Heart left ventricle (tissue), 16 donors: ENCODE measurements at regions of chr17 and their contacts with region 1.

Region 1: DNA sequence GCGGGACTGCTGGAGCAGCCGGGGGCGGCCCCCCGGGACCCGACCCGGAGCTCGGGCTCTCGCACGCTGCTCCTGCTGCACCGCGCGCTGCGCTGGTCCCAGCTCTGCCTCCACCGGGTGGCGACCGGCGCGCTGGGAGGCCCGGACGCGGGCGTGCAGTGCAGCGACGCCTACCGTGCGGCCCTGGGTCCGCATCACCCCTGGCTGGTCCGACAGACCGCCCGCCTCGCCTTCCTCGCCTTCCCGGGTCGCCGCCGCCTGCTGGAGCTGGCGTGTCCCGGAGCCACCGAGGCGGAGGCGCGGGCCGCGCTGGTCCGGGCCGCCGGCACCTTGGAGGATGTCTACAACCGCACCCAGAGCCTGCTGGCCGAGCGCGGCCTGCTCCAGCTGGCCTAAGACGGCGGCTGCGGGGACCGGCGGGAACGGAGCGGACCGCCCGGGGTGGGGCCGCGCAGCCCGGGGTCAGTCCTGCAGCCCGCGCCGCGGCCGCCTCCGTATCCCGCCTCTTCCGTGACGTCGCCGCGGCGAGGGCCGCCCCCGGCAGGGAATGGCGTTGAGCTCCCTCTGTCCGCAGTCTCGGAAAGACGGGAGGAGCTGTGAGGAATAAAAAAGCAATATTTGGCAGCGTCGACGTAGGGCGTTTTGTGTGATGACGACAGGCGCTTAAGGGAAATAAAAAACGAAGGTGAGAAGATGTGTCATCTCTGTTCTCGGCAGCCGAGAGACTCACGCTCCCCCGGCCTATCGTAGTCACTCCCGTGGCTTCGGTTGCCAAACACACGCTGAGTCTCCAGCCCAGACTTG is 1.3 kb downstream of the GLTPD2 start:
- DNase-seq: peak; percentile 87 to 94 (median 91)
- ATAC-seq: peak; percentile 87 to 96 (median 94)
- H3K4me3 ChIP-seq: peak overlapping the region; percentile 49 to 95 (median 72)
- H3K27ac ChIP-seq: peak overlapping the region; percentile 90 to 99 (median 96)
- H3K4me1 ChIP-seq: peaks cover 0 to 50% (median 36%) of the 10 kb centered on the region in 12 donors
- H3K27me3 ChIP-seq: peaks cover 0 to 15% (median 7%) of the 10 kb centered on the region in 9 donors
- CTCF ChIP-seq: peak; percentile 58 to 88 (median 76)
- POLR2A ChIP-seq: peak in 1 of 2 donors; percentile 89

Region 2: GRCh38 chr17:4709794-4710692 is 80.1 kb before region 1 on chr17 and contains the start of gene ARRB2:
- intact Hi-C with region 1: loop called in 3 of 10 experiments (anchors 2 to 5 kb)
- DNase-seq: peak; percentile 97 to 100 (median 98)
- ATAC-seq: peak; percentile 95
- H3K4me3 ChIP-seq: peak within 1 kb of the TSS; percentile 47 to 93 (median 72)
- H3K27ac ChIP-seq: peak within 1 kb of the TSS; percentile 33 to 94 (median 77)
- H3K4me1 ChIP-seq: peaks cover 0 to 42% (median 11%) of the 10 kb centered on the region in 12 donors
- H3K27me3 ChIP-seq: no peaks in the 10 kb centered on the region
- CTCF ChIP-seq: peak; percentile 37 to 80 (median 61)
- POLR2A ChIP-seq: peak in 1 of 2 donors; percentile 65
- total RNA-seq, gene ARRB2: 10.9 to 87.6 (median 23.0) TPM

Region 3: GRCh38 chr17:4733073-4733531 is 57.0 kb before region 1 on chr17:
- intact Hi-C with region 1: loop called in 8 of 10 experiments (anchors 2 to 10 kb)
- DNase-seq: peak in 2 of 5 donors; percentile 48 to 55
- ATAC-seq: no peak
- H3K4me3 ChIP-seq: no peak overlapping the region
- H3K27ac ChIP-seq: peak overlapping the region in 3 of 12 donors; percentile 24 to 91 (median 62)
- H3K4me1 ChIP-seq: peaks cover 0 to 55% (median 11%) of the 10 kb centered on the region in 12 donors
- H3K27me3 ChIP-seq: peaks cover 0 to 4% (median 0%) of the 10 kb centered on the region in 9 donors
- CTCF ChIP-seq: peak in 2 of 12 donors; percentile 8 to 10
- POLR2A ChIP-seq: no peak

Region 4: DNA sequence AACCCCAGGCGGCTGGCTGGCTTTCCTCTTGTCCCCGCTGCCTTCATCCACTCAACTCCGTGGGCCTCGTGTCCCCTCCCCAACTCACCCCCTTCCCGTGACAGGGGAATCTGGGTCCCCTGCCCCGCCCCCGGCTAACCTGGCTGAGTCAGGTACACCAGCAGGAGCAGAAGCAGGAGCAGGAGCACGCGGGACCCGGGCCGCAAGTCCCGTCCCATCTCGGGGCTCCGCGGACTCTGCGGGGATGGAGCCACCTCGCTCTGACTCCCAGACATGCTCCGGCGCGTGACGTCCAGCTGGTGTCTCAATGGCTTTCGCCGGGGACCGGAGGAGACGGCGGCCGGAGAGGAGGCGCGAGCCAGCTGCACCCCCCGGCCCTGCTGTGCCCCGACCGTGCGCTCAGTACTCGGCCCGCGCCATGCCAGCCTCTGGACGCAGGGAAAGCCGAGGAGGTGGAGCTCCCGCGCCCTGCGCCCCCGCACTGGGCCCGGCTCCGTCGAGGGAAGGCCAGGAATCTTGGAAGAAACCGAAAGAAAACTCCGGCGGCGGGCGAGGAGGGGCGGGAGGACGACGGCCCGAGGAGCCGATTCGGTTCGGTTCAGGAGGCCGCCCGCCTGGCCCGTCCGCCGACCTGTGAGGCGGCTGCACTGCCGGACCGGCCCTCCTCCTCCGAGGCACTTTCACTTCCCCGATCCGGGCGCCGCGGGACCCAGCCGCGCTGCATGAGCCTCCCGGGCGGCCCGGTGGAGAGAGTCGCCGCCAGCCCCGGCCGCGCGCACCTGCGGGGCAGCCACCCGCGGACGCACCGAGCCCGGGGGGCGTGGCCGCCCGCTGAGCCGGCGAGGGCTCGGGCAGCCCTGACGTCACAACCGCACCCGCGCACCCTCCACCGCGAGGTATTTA is 50.7 kb before region 1 on chr17 and contains the starts of genes CXCL16 and ZMYND15:
- intact Hi-C with region 1: loop called in 6 of 10 experiments (anchors 5 to 10 kb)
- DNase-seq: peak; percentile 47 to 83 (median 57)
- ATAC-seq: peak in 3 of 4 donors; percentile 63 to 72 (median 63)
- H3K4me3 ChIP-seq: peak within 1 kb of the TSS; percentile 62 to 94 (median 84)
- H3K27ac ChIP-seq: peak within 1 kb of the TSS in 8 of 12 donors; percentile 14 to 77 (median 57)
- H3K4me1 ChIP-seq: peaks cover 0 to 39% (median 10%) of the 10 kb centered on the region in 12 donors
- H3K27me3 ChIP-seq: peaks cover 0 to 30% (median 4%) of the 10 kb centered on the region in 9 donors
- CTCF ChIP-seq: no peak
- POLR2A ChIP-seq: no peak
- total RNA-seq, gene CXCL16: 1.6 to 42.5 (median 4.5) TPM
- total RNA-seq, gene ZMYND15: 0.27 to 2.9 (median 0.44) TPM in 6 of 9 donors, not detected in the others

Region 5: DNA sequence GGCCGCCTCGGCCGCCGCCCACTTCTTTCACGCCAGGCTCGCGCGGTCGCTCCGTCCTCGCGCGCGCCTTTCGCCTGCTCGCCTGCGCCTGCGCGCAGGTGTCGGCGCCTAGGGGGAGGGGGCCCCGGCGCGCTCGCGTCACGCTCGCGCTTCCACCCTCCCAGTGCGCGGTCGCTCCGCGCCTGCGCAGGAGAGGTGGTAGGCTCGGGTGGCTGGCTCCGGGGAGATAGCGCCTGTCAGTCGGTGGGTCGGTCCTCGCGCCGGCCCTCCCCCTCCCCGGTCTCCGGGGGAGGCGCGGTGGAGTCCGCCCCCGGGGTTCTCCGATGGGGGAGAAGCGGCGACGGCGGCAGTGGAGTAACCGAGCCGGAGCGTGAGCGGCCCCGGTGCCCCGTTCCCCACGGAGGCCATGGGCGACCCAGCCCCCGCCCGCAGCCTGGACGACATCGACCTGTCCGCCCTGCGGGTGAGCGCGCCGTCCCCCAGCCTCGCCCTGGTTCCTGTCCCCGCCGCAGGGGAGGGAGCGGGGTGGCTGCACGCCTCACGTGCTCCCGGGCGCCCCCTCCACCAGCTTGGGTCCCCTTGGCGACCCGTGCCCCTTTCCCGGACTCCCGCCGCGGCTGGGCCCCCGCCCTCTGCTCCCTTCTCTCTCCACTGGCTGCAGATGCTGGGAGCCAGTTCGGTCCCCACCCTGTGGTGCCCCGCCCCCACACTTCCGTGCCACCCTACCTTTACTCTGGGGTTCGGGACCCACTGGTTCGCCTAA is 43.3 kb after region 1 on chr17 and contains the start of gene MINK1:
- intact Hi-C with region 1: loop called in 6 of 10 experiments (anchors 1 to 5 kb)
- DNase-seq: peak; percentile 89 to 96 (median 92)
- ATAC-seq: peak; percentile 81 to 97 (median 96)
- H3K4me3 ChIP-seq: peak within 1 kb of the TSS; percentile 59 to 99 (median 88)
- H3K27ac ChIP-seq: peak within 1 kb of the TSS; percentile 72 to 98 (median 90)
- H3K4me1 ChIP-seq: peaks cover 4 to 49% (median 39%) of the 10 kb centered on the region in 12 donors
- H3K27me3 ChIP-seq: no peaks in the 10 kb centered on the region
- CTCF ChIP-seq: peak in 1 of 12 donors; percentile 8
- POLR2A ChIP-seq: peak; percentile 18 to 94
- total RNA-seq, gene MINK1: 23.1 to 55.8 (median 36.0) TPM

Region 6: DNA sequence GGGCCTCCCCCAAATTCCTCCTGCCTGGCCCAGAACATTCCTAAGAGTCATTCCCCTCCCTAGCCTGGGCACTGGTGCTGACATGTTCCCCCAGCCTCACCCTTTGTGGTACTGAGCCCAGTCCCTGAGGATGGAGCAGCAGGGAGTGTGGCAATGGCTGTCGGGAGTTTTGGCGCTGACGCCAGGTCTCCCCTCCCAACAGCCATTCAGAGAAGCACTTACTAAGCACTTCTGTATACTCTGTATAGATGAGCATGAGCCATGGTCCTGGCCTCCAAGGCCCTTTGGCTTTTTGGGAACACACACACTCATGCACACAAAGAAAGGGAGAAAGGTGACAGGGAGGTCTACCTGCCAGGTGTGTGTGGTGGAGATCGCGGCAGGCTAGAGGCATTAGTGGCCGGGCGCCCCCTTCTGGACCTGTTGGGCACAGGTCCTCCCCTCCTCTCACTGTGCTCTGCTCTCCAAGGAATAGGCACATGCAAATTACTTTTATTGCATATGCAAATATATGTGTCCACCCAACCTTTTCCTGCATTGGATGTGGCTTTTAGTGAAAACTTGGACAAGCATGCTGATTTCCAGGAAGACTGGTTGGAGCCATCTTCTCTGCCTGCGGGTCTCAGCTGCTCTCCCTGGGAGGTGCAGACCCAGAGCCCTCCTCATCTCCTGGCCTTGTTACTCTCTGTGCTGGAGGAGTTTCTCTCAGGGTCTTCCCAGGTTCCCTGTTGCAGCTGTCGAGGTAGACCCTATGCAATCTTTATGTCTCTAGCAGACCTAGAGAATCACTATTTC is 91.9 kb after region 1 on chr17:
- intact Hi-C with region 1: loop called in 1 of 10 experiments (anchors 5 kb)
- DNase-seq: peak in 3 of 5 donors; percentile 43 to 76 (median 60)
- ATAC-seq: peak; percentile 50 to 78 (median 66)
- H3K4me3 ChIP-seq: no peak overlapping the region
- H3K27ac ChIP-seq: no peak overlapping the region
- H3K4me1 ChIP-seq: peaks cover 0 to 26% (median 0%) of the 10 kb centered on the region in 12 donors
- H3K27me3 ChIP-seq: no peaks in the 10 kb centered on the region
- CTCF ChIP-seq: peak; percentile 69 to 86 (median 76)
- POLR2A ChIP-seq: no peak

Region 7: DNA sequence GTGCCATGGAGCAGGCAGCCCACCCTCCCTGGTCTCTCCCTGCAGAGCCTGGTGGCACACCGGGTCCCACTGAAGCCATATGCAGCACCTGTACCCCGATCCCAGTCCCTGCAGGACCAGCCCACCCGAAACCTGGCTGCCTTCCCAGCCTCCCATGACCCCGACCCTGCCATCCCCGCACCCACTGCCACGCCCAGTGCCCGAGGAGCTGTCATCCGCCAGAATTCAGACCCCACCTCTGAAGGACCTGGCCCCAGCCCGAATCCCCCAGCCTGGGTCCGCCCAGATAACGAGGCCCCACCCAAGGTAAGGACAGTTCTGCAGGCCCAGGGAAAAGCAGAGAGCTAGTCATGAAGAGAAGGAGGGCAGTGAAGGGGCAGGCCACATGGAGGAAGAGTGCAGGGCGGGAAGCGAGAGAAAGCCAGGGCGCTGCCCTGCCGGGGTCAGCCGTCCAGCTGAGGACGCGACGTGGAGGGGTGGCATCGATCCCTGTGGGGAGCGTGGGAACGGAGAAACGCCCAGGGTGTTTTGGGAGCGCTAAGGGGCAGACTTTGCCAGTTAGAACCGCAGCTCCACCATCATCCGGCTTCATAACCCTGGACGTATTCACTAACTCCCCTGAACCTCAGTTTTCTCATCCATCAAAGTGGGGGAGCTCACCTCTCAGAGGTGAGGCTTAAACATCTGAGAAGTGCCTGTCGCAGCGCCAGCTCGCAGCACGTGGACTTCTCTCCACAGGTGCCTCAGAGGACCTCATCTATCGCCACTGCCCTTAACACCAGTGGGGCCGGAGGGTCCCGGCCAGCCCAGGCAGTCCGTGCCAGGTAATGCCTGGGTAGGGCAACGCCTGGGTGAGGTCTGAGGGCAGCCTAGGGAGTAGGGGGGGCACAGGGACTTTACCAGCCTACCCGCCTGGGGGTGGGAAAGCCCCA is 101.6 kb after region 1 on chr17:
- intact Hi-C with region 1: loop called in 9 of 10 experiments (anchors 1 to 2 kb)
- DNase-seq: peak in 2 of 5 donors; percentile 25 to 66
- ATAC-seq: no peak
- H3K4me3 ChIP-seq: no peak overlapping the region
- H3K27ac ChIP-seq: no peak overlapping the region
- H3K4me1 ChIP-seq: no peaks in the 10 kb centered on the region
- H3K27me3 ChIP-seq: no peaks in the 10 kb centered on the region
- CTCF ChIP-seq: no peak
- POLR2A ChIP-seq: no peak

Region 8: GRCh38 chr17:4948931-4949320 is 158.8 kb after region 1 on chr17:
- intact Hi-C with region 1: no loop called
- DNase-seq: peak; percentile 88 to 92 (median 90)
- ATAC-seq: peak; percentile 64 to 82 (median 78)
- H3K4me3 ChIP-seq: peak overlapping the region; percentile 73 to 100 (median 98)
- H3K27ac ChIP-seq: peak overlapping the region; percentile 96 to 100 (median 99)
- H3K4me1 ChIP-seq: peaks cover 11 to 79% (median 44%) of the 10 kb centered on the region in 12 donors
- H3K27me3 ChIP-seq: no peaks in the 10 kb centered on the region
- CTCF ChIP-seq: no peak
- POLR2A ChIP-seq: peak in 1 of 2 donors; percentile 62